ENCODE measurements at regions of chr20 and their contacts with region 1.

Region 1: GRCh38 chr20:47620808-47621805 is 119.4 kb downstream of the NCOA3 start:
- DNase-seq: peak in 1 of 2 donors; percentile 23
- ATAC-seq: peak in 4 of 8 donors; percentile 49 to 64 (median 54)
- H3K4me3 ChIP-seq: no peak overlapping the region
- H3K27ac ChIP-seq: peak overlapping the region in 4 of 10 donors; percentile 4 to 35 (median 26)
- H3K4me1 ChIP-seq: peaks cover 0 to 33% (median 13%) of the 10 kb centered on the region in 9 donors
- H3K27me3 ChIP-seq: no peaks in the 10 kb centered on the region
- CTCF ChIP-seq: peak; percentile 80 to 96 (median 90)

Region 2: GRCh38 chr20:46746956-46747526 is 874.1 kb before region 1 on chr20:
- intact Hi-C with region 1: loop called in 4 of 10 experiments (anchors 10 kb)
- DNase-seq: no peak
- ATAC-seq: peak in 2 of 8 donors; percentile 26 to 28
- H3K4me3 ChIP-seq: no peak overlapping the region
- H3K27ac ChIP-seq: no peak overlapping the region
- H3K4me1 ChIP-seq: no peaks in the 10 kb centered on the region
- H3K27me3 ChIP-seq: peaks cover 0 to 39% (median 32%) of the 10 kb centered on the region in 7 donors
- CTCF ChIP-seq: no peak

Region 3: GRCh38 chr20:46757754-46758678 is 863.1 kb before region 1 on chr20:
- intact Hi-C with region 1: loop called in 3 of 10 experiments (anchors 10 kb)
- DNase-seq: peak; percentile 35 to 37
- ATAC-seq: peak in 4 of 8 donors; percentile 23 to 56 (median 48)
- H3K4me3 ChIP-seq: no peak overlapping the region
- H3K27ac ChIP-seq: no peak overlapping the region
- H3K4me1 ChIP-seq: peaks cover 0 to 4% (median 0%) of the 10 kb centered on the region in 9 donors
- H3K27me3 ChIP-seq: peaks cover 0 to 13% (median 0%) of the 10 kb centered on the region in 7 donors
- CTCF ChIP-seq: peak; percentile 80 to 95 (median 92)

Region 4: GRCh38 chr20:47196091-47197081 is 424.7 kb before region 1 on chr20:
- intact Hi-C with region 1: loop called in 8 of 10 experiments (anchors 1 to 10 kb)
- DNase-seq: peak; percentile 66 to 73
- ATAC-seq: peak; percentile 63 to 89 (median 82)
- H3K4me3 ChIP-seq: peak overlapping the region in 1 of 10 donors; percentile 15
- H3K27ac ChIP-seq: no peak overlapping the region
- H3K4me1 ChIP-seq: peaks cover 0 to 16% (median 12%) of the 10 kb centered on the region in 9 donors
- H3K27me3 ChIP-seq: no peaks in the 10 kb centered on the region
- CTCF ChIP-seq: peak; percentile 92 to 98 (median 94)

Region 5: GRCh38 chr20:47205577-47206498 is 415.3 kb before region 1 on chr20:
- intact Hi-C with region 1: loop called in 2 of 10 experiments (anchors 5 to 10 kb)
- DNase-seq: peak; percentile 38 to 76
- ATAC-seq: peak; percentile 61 to 86 (median 70)
- H3K4me3 ChIP-seq: no peak overlapping the region
- H3K27ac ChIP-seq: no peak overlapping the region
- H3K4me1 ChIP-seq: peaks cover 0 to 16% (median 0%) of the 10 kb centered on the region in 9 donors
- H3K27me3 ChIP-seq: no peaks in the 10 kb centered on the region
- CTCF ChIP-seq: peak; percentile 31 to 83 (median 67)

Region 6: DNA sequence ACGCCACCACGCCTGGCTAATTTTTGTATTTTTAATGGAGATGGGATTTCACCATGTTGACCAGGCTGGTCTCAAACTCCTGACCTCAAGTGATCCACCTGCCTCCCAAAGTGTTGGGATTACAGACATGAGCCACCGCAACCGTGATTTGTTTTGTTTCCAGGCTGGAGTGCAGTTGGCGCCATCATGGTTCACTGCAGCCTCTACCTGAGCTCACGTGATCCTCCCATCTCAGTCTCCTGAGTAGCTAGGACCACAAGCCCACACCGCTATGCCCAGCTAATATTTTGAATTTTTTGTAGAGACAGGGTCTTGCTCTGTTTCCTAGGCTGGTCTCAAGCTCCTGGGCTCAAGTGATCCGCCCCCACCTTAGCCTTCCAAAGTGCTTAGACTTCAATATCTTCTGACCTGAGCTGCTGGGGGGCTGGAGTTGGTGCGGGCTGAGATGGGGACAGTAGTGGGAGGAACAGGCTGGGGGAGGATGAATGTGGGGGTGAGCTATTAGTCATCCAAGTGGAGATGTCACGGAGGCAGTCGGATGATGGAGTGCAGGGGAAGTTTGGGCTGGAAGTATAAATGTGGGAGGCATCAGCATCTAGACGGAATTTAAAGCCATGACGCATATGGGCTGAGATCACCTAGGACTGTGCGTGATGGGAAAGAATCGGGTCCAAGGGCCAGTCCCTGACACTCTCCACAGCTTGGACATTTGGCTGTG is 241.5 kb before region 1 on chr20:
- intact Hi-C with region 1: loop called in 7 of 10 experiments (anchors 2 to 10 kb)
- DNase-seq: no peak
- ATAC-seq: no peak
- H3K4me3 ChIP-seq: no peak overlapping the region
- H3K27ac ChIP-seq: no peak overlapping the region
- H3K4me1 ChIP-seq: peaks cover 0 to 17% (median 9%) of the 10 kb centered on the region in 9 donors
- H3K27me3 ChIP-seq: no peaks in the 10 kb centered on the region
- CTCF ChIP-seq: no peak

Region 7: DNA sequence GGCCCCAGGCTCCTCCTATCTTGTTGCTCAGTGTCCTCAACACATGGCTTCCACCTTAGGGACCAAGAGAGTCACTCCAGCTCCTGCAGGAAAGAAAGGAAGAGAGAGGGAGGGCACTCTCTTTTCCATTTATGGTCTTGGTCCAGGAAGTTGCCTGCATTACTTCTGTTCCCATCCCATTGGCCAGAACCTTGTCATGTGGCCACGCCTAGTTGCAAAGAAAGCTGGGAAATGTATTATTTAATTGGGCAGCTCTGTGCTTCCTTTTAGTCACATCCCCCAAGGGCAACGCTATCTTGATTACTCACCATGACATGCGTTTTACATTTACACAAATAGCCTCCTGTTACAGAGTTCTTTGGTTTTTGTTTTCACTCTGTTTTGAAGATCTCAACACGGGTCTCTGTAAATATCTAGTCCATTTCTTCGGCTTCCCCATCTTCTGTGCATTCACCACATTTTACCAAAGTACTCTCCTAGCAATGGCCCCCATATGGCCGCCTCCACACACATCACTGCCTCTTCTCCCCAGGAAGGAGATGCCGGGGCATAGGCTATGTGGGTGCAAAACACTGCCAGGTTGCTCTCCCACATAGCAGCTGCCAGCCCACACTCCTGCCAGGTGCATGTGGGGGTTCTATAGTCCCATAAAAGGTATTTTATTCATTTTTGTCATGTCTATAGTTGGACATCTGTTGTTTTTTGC is 228.9 kb before region 1 on chr20:
- intact Hi-C with region 1: loop called in 7 of 10 experiments (anchors 5 to 10 kb)
- DNase-seq: no peak
- ATAC-seq: peak in 7 of 8 donors; percentile 39 to 90 (median 54)
- H3K4me3 ChIP-seq: no peak overlapping the region
- H3K27ac ChIP-seq: peak overlapping the region in 2 of 10 donors; percentile 56 to 66
- H3K4me1 ChIP-seq: peaks cover 0 to 14% (median 0%) of the 10 kb centered on the region in 9 donors
- H3K27me3 ChIP-seq: no peaks in the 10 kb centered on the region
- CTCF ChIP-seq: no peak

Region 8: GRCh38 chr20:47701612-47702011 is 80.5 kb after region 1 on chr20:
- intact Hi-C with region 1: no loop called
- DNase-seq: no peak
- ATAC-seq: no peak
- H3K4me3 ChIP-seq: no peak overlapping the region
- H3K27ac ChIP-seq: no peak overlapping the region
- H3K4me1 ChIP-seq: peaks cover 0 to 32% (median 13%) of the 10 kb centered on the region in 9 donors
- H3K27me3 ChIP-seq: no peaks in the 10 kb centered on the region
- CTCF ChIP-seq: no peak

Region 9: GRCh38 chr20:48463403-48464319 is 842.6 kb after region 1 on chr20:
- intact Hi-C with region 1: no loop called
- DNase-seq: no peak
- ATAC-seq: peak in 4 of 8 donors; percentile 42 to 67 (median 50)
- H3K4me3 ChIP-seq: no peak overlapping the region
- H3K27ac ChIP-seq: no peak overlapping the region
- H3K4me1 ChIP-seq: no peaks in the 10 kb centered on the region
- H3K27me3 ChIP-seq: peaks cover 0 to 16% (median 4%) of the 10 kb centered on the region in 7 donors
- CTCF ChIP-seq: no peak